Activated CD8-positive, alpha-beta memory T cell treated with anti-CD3 and anti-CD28 coated beads, Interleukin-2, amount 10 ng/mL, durations not matched to agents 7 days and 5 days (primary cell): ENCODE measurements at regions of chr12 and their contacts with region 1.

Region 1: DNA sequence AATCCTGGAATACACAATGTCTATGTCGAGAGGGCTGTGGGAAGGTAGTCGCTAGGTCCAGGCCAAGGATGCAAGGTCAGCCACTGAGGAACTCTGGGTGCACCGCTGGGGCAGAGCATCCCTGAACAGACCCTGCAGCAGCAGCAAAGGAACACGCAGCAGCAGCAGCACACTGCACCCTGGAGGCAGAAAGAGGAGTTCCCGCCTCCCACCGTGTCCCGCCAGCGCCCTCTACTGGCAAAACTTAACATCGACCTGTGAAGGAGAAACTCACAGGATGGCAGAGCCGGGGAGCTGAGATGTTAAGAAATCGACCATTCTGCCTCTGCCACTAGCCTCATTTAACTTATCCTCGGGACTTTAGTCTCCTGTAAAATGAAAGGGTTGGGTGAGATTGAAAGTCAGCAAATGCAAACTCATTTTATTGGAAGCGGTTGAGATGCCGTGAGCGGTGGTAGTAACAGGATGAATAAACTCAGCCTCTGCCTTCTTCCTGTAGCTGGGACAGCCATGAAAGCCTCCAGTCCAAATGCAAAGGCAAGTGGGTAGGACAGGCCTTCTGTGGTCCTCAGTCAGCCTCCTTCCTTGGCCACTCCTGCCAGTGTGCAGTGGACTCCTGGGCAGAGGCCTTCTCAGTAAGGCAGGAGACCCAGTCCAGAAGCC is 45.6 kb downstream of the STAB2 start:
- DNase-seq: peak; percentile 80
- ATAC-seq: peak; percentile 53
- H3K4me3 Mint-ChIP-seq: no peak overlapping the region
- H3K27ac Mint-ChIP-seq: no peak overlapping the region
- H3K4me1 Mint-ChIP-seq: no peaks in the 10 kb centered on the region
- H3K27me3 Mint-ChIP-seq: peaks cover 5% of the 10 kb centered on the region

Region 2: GRCh38 chr12:103571286-103571685 is 61.4 kb before region 1 on chr12:
- CTCF ChIA-PET with region 1: interaction called, 14 read pairs
- DNase-seq: no peak
- ATAC-seq: no peak
- H3K4me3 Mint-ChIP-seq: no peak overlapping the region
- H3K27ac Mint-ChIP-seq: no peak overlapping the region
- H3K4me1 Mint-ChIP-seq: peaks cover 3% of the 10 kb centered on the region
- H3K27me3 Mint-ChIP-seq: peaks cover 73% of the 10 kb centered on the region